ENCODE measurements at regions of chr9 and their contacts with region 1.

Region 1: DNA sequence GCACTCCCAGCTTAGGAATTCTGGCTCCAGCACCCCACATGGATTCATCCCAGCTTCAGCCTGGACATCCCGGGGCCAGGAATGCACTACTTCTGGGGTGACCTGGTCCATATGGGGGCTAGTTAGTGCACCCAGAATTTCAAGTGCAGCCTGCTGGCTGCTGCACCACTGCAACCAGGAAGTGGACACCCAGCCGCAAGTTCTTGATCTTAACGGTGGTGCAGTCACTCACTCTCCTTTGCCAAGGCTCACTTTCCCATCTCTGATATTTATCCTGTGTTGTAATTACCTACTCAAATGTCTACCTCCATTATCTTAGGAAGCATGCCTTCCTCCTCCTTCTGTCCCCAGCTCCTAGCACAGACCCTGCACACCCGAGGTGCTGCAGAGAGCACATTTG is 26.2 kb upstream of the RAB14 start:
- DNase-seq: no peak
- H3K4me3 ChIP-seq: no peak overlapping the region
- H3K27ac ChIP-seq: no peak overlapping the region
- H3K4me1 ChIP-seq: no peaks in the 10 kb centered on the region
- H3K27me3 ChIP-seq: no peaks in the 10 kb centered on the region
- CTCF ChIP-seq: no peak
- POLR2A ChIP-seq: no peak

Region 2: GRCh38 chr9:119509291-119509905 is 1718.5 kb before region 1 on chr9:
- intact Hi-C with region 1: no loop called
- DNase-seq: no peak
- H3K4me3 ChIP-seq: no peak overlapping the region
- H3K27ac ChIP-seq: no peak overlapping the region
- H3K4me1 ChIP-seq: no peaks in the 10 kb centered on the region
- H3K27me3 ChIP-seq: no peaks in the 10 kb centered on the region
- CTCF ChIP-seq: no peak
- POLR2A ChIP-seq: no peak

Region 3: DNA sequence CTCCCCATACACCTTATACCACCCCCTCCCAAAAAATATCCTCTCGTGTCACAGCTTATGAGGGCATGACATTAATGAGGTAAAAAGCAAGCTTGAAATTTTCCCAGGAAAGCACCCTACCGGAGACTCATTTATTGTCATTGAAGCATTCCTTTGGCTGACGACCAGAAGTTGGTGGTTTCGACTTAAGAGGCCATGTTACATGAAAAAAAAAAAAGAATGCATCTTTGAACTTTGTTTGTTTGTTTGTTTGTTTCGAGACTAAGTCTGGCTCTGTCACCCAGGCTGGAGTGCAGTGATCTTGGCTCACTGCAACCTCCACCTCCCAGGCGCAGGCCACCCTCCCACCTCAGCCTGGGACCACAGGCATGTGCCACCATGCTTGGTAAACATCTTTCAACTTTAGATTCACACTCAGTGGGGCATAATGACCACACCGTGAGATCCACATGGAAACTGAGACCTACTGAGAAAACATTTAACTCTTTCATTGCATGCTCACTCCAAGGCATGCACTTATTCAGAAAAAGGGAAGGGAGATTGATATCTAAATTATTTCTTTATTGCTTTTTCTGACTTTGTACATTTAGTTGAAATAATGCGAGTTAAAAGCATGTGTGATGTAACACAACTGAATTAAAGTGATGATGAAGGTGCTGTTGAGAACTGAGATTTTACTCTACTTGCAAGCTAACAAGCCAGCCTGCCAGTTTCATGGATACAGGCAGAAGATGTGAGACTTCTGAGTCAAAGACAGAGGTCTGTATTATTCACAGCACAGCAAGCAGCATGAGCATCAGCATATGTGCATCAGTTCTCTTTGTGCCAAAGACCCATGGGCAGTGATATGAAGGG is 21.1 kb before region 1 on chr9:
- intact Hi-C with region 1: loop called (anchors 1 kb)
- DNase-seq: no peak
- H3K4me3 ChIP-seq: no peak overlapping the region
- H3K27ac ChIP-seq: no peak overlapping the region
- H3K4me1 ChIP-seq: peaks cover 5% of the 10 kb centered on the region
- H3K27me3 ChIP-seq: no peaks in the 10 kb centered on the region
- CTCF ChIP-seq: no peak
- POLR2A ChIP-seq: no peak

Region 4: DNA sequence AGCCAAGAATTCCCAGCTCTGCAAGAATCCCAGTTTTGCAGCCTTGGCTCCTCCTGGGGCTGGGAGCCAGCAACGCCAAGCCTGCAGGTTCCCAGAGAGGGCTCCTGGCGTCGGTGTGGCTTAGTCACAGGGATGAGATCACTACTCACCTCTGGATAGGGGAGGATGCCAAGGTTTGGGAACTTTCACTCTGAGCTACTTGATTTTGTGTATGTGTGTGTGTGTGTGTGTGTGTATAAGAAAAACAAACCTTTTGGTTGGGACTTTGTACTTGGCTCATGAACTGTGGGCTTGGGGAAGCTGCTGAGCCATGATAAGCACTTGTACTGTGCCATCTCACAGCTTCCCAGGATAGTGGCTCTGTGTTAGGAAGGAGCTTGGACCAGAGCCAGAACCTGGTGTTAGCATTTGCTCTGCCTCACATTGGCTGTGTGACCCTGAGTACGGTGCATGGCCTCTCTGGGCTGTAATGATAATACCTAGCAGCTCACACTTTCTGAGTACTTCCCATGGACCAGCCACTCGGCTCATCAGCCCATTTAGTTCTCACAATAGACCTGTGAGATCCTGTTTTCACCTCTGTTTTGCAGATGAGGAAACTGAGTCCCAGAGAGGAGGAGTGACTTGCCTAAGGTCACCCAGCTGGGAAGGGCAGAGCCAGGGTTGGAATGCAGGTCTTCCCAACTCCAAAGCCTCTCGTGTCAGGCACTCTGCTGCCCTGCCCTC is 382.1 kb after region 1 on chr9:
- intact Hi-C with region 1: no loop called
- DNase-seq: no peak
- H3K4me3 ChIP-seq: no peak overlapping the region
- H3K27ac ChIP-seq: no peak overlapping the region
- H3K4me1 ChIP-seq: peaks cover 60% of the 10 kb centered on the region
- H3K27me3 ChIP-seq: no peaks in the 10 kb centered on the region
- CTCF ChIP-seq: no peak
- POLR2A ChIP-seq: no peak

Measured in vagina (tissue), 2 donors.